Panc1 (cell line): ENCODE measurements at regions of chr2 and their contacts with region 1.

Region 1: GRCh38 chr2:42309366-42309765 is 51.7 kb downstream of the COX7A2L start:
- DNase-seq: no peak
- ATAC-seq: no peak
- H3K4me3 ChIP-seq: no peak overlapping the region
- H3K27ac ChIP-seq: no peak overlapping the region
- H3K4me1 ChIP-seq: no peaks in the 10 kb centered on the region
- H3K27me3 ChIP-seq: no peaks in the 10 kb centered on the region
- CTCF ChIP-seq: no peak

Region 2: GRCh38 chr2:42150159-42150558 is 159.2 kb before region 1 on chr2:
- CTCF ChIA-PET with region 1: interaction called, 12 read pairs
- POLR2A ChIA-PET with region 1: no interaction called
- in situ Hi-C with region 1: no loop called
- intact Hi-C with region 1: no loop called
- DNase-seq: no peak
- ATAC-seq: no peak
- H3K4me3 ChIP-seq: no peak overlapping the region
- H3K27ac ChIP-seq: no peak overlapping the region; the same call in 1 of the 2 replicates
- H3K4me1 ChIP-seq: peaks cover 13% of the 10 kb centered on the region
- H3K27me3 ChIP-seq: no peaks in the 10 kb centered on the region
- CTCF ChIP-seq: no peak

Region 3: DNA sequence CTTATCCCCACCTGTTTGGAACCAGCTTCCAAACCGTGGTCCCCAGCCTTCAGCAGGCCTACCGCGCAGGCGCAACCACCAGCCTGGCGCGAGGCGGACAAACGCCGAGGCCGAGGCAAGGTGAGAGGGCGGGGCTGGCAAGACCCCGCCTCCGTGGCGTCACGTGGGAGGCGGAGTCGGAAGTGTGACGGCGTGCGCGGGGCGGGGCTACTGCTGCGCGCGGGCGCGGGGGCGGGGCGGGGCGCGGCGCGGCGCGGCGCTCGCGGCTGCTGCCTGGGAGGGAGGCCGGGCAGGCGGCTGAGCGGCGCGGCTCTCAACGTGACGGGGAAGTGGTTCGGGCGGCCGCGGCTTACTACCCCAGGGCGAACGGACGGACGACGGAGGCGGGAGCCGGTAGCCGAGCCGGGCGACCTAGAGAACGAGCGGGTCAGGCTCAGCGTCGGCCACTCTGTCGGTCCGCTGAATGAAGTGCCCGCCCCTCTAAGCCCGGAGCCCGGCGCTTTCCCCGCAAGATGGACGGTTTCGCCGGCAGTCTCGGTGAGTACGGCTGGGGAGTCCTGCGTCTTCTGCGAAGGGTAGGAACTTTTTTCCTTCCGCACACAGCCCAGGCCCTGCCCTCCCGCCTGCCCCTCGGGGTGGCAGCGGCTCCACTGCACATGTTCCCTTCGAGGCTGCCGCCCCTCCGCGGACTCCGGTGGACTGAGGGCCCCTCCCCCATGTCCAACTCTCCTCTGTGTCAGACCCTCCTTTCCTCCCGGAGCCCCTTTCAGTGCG is 140.1 kb before region 1 on chr2 and contains the start of gene EML4:
- CTCF ChIA-PET with region 1: no interaction called
- POLR2A ChIA-PET with region 1: no interaction called
- in situ Hi-C with region 1: no loop called
- intact Hi-C with region 1: no loop called
- DNase-seq: peak; percentile 56
- ATAC-seq: peak; percentile 95
- H3K4me3 ChIP-seq: peak within 1 kb of the TSS; percentile 80 to 90
- H3K27ac ChIP-seq: peak within 1 kb of the TSS; percentile 96
- H3K4me1 ChIP-seq: peaks cover 41% of the 10 kb centered on the region
- H3K27me3 ChIP-seq: no peaks in the 10 kb centered on the region
- CTCF ChIP-seq: no peak
- total RNA-seq, gene EML4: 107 TPM

Region 4: GRCh38 chr2:42223855-42224268 is 85.5 kb before region 1 on chr2:
- CTCF ChIA-PET with region 1: no interaction called
- POLR2A ChIA-PET with region 1: no interaction called
- in situ Hi-C with region 1: no loop called
- intact Hi-C with region 1: no loop called
- DNase-seq: no peak
- ATAC-seq: no peak
- H3K4me3 ChIP-seq: no peak overlapping the region
- H3K27ac ChIP-seq: peak overlapping the region; percentile 60
- H3K4me1 ChIP-seq: peaks cover 38% of the 10 kb centered on the region
- H3K27me3 ChIP-seq: no peaks in the 10 kb centered on the region
- CTCF ChIP-seq: no peak

Region 5: DNA sequence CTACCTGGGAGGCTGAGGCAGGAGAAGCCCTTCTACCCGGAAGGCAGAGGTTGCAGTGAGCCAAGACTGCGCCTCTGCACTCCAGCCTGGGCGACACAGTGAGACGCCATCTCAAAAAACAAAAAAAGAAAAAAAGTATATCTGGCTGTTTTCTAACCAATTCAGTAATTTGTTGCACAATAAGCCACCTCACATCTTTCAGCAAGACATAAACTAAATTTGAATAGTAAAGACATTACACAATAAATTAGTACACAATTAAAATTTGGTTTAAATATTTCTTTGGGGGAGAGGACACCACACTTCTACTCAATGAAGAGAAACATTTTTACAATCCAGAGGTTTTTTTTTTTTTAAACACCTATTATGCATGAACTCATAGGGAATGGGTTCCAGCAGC is 223.0 kb after region 1 on chr2:
- CTCF ChIA-PET with region 1: interaction called, 15 read pairs
- POLR2A ChIA-PET with region 1: no interaction called
- in situ Hi-C with region 1: no loop called
- intact Hi-C with region 1: no loop called
- DNase-seq: no peak
- ATAC-seq: no peak
- H3K4me3 ChIP-seq: no peak overlapping the region
- H3K27ac ChIP-seq: no peak overlapping the region
- H3K4me1 ChIP-seq: peaks cover 6% of the 10 kb centered on the region
- H3K27me3 ChIP-seq: no peaks in the 10 kb centered on the region
- CTCF ChIP-seq: no peak